ENCODE measurements at regions of chr10 and their contacts with region 1.

Region 1: DNA sequence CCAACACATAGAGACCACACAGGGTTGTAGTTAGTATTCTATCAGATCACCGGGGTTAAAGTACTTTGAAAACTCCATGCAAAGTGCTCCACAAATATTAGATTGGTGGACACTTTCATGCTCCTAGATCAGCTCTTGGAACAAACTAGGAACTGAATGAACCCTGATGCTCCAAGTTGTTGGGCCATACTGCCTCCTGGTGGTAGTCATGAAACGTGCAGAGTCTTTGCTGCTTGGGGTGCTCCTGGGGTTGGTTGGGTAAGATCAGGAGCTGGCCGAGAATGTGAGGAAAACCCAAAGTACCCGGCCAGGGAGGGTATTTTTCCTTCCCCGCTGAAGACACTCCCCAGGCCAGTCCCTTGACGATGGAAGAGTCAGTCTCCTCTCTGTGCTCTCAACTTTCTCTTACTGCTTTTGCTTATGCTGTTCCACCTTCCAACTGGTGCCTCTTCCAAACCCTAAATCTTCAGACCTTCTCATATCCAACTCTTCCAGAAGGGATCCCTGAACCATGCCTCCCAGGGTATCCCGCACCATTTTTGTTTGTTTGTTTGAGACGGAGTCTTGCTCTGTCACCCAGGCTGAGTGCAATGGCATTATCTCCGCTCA is 920 bp upstream of the RPEL1 start:
- DNase-seq: peak; percentile 81
- ATAC-seq: peak; percentile 94
- H3K4me3 ChIP-seq: no peak overlapping the region
- H3K27ac ChIP-seq: no peak overlapping the region
- H3K4me1 ChIP-seq: peaks cover 6% of the 10 kb centered on the region
- H3K27me3 ChIP-seq: no peaks in the 10 kb centered on the region
- CTCF ChIP-seq: peak; percentile 91
- POLR2A ChIP-seq: no peak
- RAD21 ChIP-seq: peak; percentile 96

Region 2: DNA sequence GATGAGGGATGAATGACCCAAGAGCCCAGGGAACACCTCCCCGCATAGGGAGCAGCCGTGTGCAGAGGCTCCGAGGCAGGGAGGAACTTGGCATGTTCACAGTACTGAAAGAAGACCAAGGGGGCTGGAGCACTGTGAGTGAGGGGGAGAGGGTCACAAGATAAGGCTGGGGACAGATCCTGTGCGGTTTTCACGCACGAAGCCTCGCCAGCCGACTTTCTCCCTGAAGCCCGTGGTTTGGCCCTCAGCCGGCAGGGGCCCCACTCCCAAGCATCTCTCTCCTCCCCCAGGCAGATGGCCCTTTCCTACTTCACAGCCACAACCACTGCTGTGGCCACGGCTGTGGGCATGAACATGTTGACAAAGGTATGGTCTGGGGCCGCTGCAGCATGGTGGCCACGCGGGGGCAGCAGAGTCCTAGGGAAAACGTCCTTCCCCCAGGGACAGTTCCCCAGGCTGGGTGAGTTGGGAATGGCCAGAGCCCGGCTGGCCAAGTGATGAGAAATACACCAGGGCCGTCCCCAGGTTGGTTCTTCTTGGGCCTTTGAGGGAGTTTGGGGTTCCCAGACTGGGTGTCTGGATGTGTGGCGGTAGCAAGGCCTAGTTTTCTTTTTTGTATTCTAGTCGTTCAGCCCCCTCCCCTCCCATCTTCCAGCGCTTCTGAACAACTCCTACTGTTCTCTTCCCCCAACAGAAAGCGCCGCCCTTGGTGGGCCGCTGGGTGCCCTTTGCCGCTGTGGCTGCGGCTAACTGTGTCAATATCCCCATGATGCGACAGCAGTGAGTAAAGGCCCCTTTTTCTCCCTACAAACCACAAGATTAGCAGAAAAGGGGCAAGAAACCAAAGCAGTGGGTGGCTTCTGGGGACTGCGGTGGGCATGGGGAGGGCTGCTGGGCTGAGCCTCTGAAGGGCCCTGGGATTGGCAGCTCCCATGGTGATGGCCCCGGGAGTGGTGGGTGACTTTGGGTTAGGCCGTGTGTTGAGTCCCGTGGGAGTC is 515.4 kb before region 1 on chr10:
- CTCF ChIA-PET with region 1: no interaction called
- POLR2A ChIA-PET with region 1: no interaction called
- dilution Hi-C with region 1: no loop called
- in situ Hi-C with region 1: no loop called
- intact Hi-C with region 1: loop called (anchors 10 kb)
- DNase-seq: peak; percentile 73
- ATAC-seq: peak; percentile 100
- H3K4me3 ChIP-seq: no peak overlapping the region
- H3K27ac ChIP-seq: no peak overlapping the region
- H3K4me1 ChIP-seq: peaks cover 2% of the 10 kb centered on the region; the same call in 1 of the 2 replicates
- H3K27me3 ChIP-seq: no peaks in the 10 kb centered on the region
- CTCF ChIP-seq: peak; percentile 97
- POLR2A ChIP-seq: no peak
- RAD21 ChIP-seq: peak; percentile 99

Region 3: GRCh38 chr10:102835007-102835482 is 409.7 kb before region 1 on chr10:
- CTCF ChIA-PET with region 1: no interaction called
- POLR2A ChIA-PET with region 1: no interaction called
- dilution Hi-C with region 1: no loop called
- in situ Hi-C with region 1: no loop called
- intact Hi-C with region 1: loop called (anchors 10 kb)
- DNase-seq: peak; percentile 71
- ATAC-seq: peak; percentile 99
- H3K4me3 ChIP-seq: no peak overlapping the region
- H3K27ac ChIP-seq: no peak overlapping the region
- H3K4me1 ChIP-seq: no peaks in the 10 kb centered on the region
- H3K27me3 ChIP-seq: peaks cover 19% of the 10 kb centered on the region
- CTCF ChIP-seq: peak; percentile 90
- POLR2A ChIP-seq: no peak
- RAD21 ChIP-seq: peak; percentile 98

Region 4: DNA sequence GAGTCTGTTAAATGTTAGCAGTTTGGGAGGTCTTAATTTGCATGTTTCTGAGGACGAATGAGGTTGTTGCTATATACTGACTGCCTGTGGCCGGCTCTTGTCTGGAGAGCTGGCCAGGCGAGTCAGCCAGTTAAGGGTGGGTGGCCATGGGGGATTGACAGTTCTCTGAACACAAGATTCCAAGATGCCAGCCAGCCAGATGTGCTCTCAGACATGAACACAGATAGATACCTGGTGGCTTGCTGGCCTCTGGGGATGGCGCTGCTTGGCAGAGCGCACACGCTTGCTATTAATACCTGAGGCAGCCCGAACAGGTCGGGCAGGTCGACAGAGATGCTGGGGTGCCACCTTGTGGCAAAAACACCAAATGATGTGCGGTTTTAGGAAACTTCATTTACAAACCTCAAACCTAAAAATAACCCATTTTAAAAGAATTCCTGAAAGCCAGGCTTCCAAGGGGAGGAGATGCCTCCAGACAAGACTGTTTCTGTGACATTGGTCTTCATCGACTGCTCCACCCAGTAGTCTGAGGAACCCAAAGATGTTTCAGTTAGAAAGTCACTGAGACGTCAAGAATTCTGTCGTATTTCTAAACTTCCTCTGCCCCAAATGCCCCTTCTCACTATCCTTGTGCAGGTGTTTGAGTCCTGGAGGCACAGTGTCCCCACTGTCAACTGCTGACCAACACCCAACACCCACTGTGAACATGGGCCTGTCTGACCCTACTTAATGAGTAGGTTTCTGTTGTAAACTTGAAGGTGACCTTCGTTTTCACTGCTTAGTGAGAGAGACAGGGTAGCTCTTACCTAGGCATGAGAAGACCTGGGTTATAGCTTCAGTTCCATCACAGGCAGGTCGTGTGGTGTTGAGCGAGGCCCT is 175.1 kb before region 1 on chr10:
- CTCF ChIA-PET with region 1: interaction called, 3 read pairs
- POLR2A ChIA-PET with region 1: no interaction called
- dilution Hi-C with region 1: no loop called
- in situ Hi-C with region 1: no loop called
- intact Hi-C with region 1: loop called (anchors 1 kb)
- DNase-seq: peak; percentile 68
- ATAC-seq: peak; percentile 72
- H3K4me3 ChIP-seq: no peak overlapping the region
- H3K27ac ChIP-seq: no peak overlapping the region
- H3K4me1 ChIP-seq: peaks cover 4% of the 10 kb centered on the region; the same call in 1 of the 2 replicates
- H3K27me3 ChIP-seq: no peaks in the 10 kb centered on the region
- CTCF ChIP-seq: peak; percentile 79
- POLR2A ChIP-seq: no peak
- RAD21 ChIP-seq: peak; percentile 89

Region 5: GRCh38 chr10:103080891-103081581 is 163.7 kb before region 1 on chr10:
- CTCF ChIA-PET with region 1: interaction called, 5 read pairs
- POLR2A ChIA-PET with region 1: interaction called, 3 read pairs
- dilution Hi-C with region 1: no loop called
- in situ Hi-C with region 1: loop called (anchors 10 kb)
- intact Hi-C with region 1: loop called (anchors 1 kb)
- DNase-seq: no peak
- ATAC-seq: no peak
- H3K4me3 ChIP-seq: no peak overlapping the region
- H3K27ac ChIP-seq: no peak overlapping the region
- H3K4me1 ChIP-seq: peaks cover 9% of the 10 kb centered on the region
- H3K27me3 ChIP-seq: no peaks in the 10 kb centered on the region
- CTCF ChIP-seq: no peak
- POLR2A ChIP-seq: no peak
- RAD21 ChIP-seq: no peak

Region 6: GRCh38 chr10:103086799-103087198 is 158.0 kb before region 1 on chr10:
- CTCF ChIA-PET with region 1: interaction called, 8 read pairs
- POLR2A ChIA-PET with region 1: interaction called, 3 read pairs
- dilution Hi-C with region 1: no loop called
- in situ Hi-C with region 1: loop called (anchors 10 kb)
- intact Hi-C with region 1: loop called (anchors 1 kb)
- DNase-seq: no peak
- ATAC-seq: peak; percentile 15
- H3K4me3 ChIP-seq: no peak overlapping the region
- H3K27ac ChIP-seq: peak overlapping the region; percentile 98
- H3K4me1 ChIP-seq: peaks cover 15% of the 10 kb centered on the region
- H3K27me3 ChIP-seq: no peaks in the 10 kb centered on the region
- CTCF ChIP-seq: no peak
- POLR2A ChIP-seq: no peak
- RAD21 ChIP-seq: no peak

Region 7: DNA sequence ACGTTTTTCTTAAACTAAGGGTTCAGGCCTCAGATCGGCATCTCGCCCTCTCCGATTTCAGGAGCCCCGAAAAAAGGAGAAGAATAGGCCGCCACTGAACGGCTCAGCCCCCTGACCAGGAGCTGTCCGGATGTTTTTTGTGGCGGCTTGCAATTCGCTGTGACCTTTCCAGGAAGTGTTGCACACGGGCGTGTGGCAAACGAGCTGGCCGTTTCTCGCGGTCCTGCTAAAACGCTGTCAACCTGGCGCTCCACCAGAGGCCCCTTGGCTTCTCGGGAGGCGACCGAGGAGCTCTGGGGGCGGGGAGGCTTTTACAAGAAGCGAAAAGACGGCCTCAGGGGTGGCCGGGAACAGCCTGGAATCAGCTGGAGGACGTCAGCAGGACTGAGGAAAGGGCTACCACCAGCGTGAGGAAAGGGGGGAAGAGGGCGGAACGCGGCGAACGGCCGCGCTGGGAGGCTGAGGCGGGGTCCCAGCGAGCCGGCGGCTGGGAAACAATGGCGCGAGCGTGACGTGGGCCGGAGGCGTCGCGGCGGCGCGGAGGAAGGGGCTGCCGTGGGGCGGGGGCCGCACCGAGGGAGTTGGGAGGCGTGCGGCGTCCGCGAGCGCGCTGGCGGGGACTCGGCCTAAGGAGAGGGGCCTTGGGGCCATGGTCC is 52.2 kb before region 1 on chr10:
- CTCF ChIA-PET with region 1: interaction called, 6 read pairs
- POLR2A ChIA-PET with region 1: interaction called, 3 read pairs
- dilution Hi-C with region 1: no loop called
- in situ Hi-C with region 1: no loop called
- intact Hi-C with region 1: loop called (anchors 2 kb)
- DNase-seq: peak; percentile 75
- ATAC-seq: peak; percentile 62
- H3K4me3 ChIP-seq: peak overlapping the region; percentile 92
- H3K27ac ChIP-seq: peak overlapping the region; percentile 98
- H3K4me1 ChIP-seq: peaks cover 16% of the 10 kb centered on the region
- H3K27me3 ChIP-seq: no peaks in the 10 kb centered on the region
- CTCF ChIP-seq: no peak
- POLR2A ChIP-seq: no peak; the same call in 1 of the 2 replicates
- RAD21 ChIP-seq: no peak

Measured in IMR-90 (cell line).